Colonic mucosa (tissue), 4 donors: ENCODE measurements at regions of chr14 and their contacts with region 1.

Region 1: DNA sequence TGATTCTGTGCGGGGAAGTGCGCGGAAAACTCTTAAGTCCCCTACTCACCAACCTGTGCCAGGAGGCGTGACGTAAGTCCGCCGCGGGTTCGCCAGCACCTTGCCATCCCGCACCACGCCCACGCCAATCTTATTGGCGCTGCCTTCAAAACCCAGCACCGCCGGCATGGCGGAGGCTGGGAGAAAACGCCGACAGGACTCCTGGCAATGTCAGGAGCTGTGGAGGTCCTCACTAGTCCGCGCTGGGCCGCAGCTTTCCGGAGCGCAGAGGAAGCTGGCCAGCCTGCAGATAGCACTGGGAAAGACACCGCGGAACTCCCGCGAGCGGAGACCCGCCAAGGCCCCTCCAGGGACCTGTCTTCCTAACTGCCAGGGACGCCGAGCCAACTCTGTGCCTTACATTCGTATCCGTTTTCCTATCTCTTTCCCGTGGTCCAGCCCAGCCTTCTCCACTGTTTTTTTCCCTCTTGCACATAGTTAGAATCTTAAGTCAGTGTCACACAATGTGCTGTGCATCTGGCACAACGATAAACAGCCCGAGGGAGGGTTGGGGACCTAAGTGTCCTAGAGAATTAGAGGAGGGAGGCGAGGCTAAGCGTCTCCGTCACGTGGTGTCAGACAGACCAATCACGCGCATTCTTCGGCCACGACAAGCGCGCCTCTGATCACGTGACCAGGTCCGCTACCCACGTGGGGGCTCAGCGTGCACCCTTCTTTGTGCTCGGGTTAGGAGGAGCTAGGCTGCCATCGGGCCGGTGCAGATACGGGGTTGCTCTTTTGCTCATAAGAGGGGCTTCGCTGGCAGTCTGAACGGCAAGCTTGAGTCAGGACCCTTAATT is at the starts of genes APEX1 and OSGEP:
- DNase-seq: peak; percentile 99
- H3K4me3 ChIP-seq: peak within 1 kb of the TSS; percentile 69
- H3K27ac ChIP-seq: peak within 1 kb of the TSS; percentile 97
- H3K4me1 ChIP-seq: peaks cover 9% of the 10 kb centered on the region
- H3K27me3 ChIP-seq: no peaks in the 10 kb centered on the region
- CTCF ChIP-seq: no peak
- total RNA-seq, gene APEX1: 119 to 169 TPM
- total RNA-seq, gene OSGEP: 26.9 to 42.0 TPM

Region 2: GRCh38 chr14:20365928-20366327 is 88.8 kb before region 1 on chr14:
- intact Hi-C with region 1: loop called (anchors 10 kb)
- DNase-seq: no peak
- H3K4me3 ChIP-seq: no peak overlapping the region
- H3K27ac ChIP-seq: no peak overlapping the region
- H3K4me1 ChIP-seq: no peaks in the 10 kb centered on the region
- H3K27me3 ChIP-seq: no peaks in the 10 kb centered on the region
- CTCF ChIP-seq: no peak

Region 3: GRCh38 chr14:20714593-20715250 is 260.0 kb after region 1 on chr14:
- intact Hi-C with region 1: no loop called
- DNase-seq: peak; percentile 69
- H3K4me3 ChIP-seq: no peak overlapping the region
- H3K27ac ChIP-seq: no peak overlapping the region
- H3K4me1 ChIP-seq: no peaks in the 10 kb centered on the region
- H3K27me3 ChIP-seq: no peaks in the 10 kb centered on the region
- CTCF ChIP-seq: no peak

Region 4: GRCh38 chr14:20774338-20774737 is 319.6 kb after region 1 on chr14:
- intact Hi-C with region 1: no loop called
- DNase-seq: no peak
- H3K4me3 ChIP-seq: no peak overlapping the region
- H3K27ac ChIP-seq: no peak overlapping the region
- H3K4me1 ChIP-seq: no peaks in the 10 kb centered on the region
- H3K27me3 ChIP-seq: no peaks in the 10 kb centered on the region
- CTCF ChIP-seq: no peak